ENCODE measurements at regions of chr22 and their contacts with region 1.

Region 1: DNA sequence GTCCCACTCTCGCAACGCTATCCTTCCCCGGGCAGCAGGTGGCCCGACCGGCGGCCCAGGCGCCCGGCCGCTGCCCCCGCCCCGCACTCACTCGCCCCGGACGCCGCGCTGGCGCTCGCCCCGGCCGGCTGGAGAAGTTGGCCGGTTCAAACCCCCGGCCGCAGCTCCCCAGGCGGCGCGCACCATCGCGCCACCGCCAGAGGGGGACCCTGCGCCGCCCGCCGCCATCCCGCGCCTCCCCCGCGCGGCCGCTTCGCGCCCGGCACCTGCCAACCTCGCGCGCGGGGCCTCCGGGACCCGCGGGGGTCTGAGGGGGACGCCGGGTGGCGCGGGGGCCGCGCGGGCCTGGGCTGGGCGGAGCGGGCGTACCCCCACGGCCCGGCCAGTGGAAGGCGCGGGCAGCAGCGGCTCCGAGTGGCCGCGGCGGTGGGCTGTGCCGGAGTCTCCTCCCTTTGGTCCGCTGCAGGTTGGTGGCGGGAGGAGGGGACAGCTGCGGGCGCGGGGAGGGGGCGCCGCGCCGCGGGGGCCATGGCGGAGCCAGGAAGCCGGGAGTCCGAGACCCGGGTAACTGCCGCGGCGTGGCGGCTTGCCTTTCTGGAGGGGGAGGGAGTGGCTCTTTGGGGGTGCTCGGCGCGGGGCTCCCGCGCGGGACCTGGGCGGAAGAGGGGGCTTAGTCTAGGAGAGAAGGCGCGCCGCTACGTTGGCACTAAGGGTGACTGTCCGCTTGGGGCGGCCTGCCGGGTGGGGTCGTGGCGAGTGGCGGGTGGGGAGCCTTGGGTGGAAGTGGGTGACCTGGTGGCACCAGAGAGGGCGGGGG is at the starts of genes MPST and TST:
- DNase-seq: peak; percentile 89

Region 2: DNA sequence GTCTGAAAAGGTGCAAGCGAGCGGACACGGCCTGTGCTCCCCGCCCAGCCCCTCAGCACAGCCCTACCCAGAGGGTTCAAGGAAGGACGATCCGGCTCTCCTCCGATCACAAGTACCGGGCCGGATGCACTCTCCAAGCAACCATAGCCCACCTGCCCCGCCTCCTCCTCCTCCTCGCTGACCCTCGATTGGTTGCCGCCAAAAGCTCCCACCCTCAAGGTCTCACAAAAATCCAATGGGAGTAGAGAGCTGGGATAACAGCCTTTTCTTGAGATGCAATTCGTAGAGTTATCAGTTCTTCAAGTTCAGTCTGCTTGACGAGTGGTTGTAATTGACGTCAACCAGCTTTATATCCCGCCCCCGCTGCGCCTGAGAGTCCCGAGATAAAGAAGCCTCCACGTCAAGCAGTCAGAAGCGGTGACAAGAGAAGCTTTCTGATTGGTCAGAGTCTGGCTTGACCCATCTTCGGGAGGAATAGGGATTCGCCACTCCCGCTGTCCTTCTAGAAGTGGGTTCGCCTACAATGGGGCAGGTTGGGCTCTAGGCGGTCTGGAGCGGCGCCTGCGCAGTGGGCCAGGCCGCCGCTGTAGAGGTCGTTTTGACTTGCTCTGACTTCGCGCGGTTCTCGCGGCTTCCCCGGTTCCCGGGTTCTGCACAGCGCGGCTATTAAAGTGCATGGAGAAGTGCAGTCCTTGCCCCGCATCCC is 243.4 kb before region 1 on chr22 and contains the start of gene IFT27:
- CTCF ChIA-PET with region 1: no interaction called
- POLR2A ChIA-PET with region 1: interaction called, 10 read pairs
- DNase-seq: peak; percentile 100

Region 3: DNA sequence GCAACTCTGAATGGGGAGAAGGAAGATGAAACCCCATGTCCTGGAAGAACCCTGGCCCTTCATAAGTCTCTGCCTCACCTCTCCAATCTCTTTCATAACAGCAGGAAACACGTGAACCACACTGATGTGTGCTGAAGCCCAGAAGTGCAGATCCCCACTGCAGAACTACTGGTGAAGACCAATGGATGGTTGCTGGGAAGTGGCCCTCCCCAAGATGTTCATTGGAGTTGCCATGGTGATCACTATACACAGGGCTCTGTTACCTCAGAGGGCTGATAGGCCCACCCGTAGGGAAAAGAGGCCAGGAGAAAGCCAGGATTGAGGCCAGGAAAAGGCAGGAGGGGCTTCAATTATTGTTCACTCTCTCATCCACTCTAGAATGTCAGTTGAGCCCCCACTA is 11.9 kb before region 1 on chr22:
- CTCF ChIA-PET with region 1: no interaction called
- POLR2A ChIA-PET with region 1: interaction called, 21 read pairs
- DNase-seq: no peak

Region 4: DNA sequence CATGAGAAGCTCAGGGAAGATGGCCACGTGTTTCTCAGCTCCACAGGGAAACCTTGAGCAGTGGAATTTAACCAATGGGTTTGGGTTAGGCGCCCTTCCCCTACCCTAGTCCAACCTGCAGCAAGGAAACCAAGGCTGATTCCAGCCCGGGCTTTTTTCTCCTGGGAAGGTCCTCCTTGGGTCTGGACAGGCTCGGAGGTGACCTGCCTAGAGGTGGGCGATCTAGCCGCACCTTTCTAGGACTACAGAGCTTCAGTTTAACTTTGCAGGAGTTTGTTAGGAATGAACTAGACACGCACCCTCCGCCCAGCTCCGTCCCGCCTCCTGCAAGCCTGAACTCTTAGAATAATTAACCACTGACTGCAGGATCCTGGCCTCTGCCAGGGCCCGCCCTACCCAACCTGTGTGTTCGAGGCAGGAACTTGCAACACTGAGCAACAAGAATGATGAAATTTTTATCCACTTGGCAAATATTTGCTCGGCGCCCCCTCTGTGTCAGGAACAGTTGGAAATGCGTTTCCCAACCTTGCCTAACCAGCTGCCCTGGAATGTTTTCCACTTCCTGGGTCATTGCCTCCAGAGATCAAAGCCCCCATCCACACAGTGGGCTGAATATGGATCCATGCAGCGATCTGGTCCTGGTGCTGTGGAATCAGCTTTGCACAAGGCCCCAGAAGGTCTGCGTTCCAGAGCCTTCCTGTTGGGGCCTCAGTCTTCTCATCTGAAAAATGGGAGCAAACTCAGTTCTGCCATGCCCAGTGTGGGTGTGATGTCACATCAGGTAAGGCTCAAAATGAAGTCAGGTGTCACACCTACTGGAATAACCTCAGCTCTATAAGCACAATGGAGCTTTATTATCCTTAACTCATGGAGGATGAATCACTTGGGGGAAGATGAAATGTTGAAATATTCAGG is 13.3 kb after region 1 on chr22:
- CTCF ChIA-PET with region 1: interaction called, 10 read pairs
- POLR2A ChIA-PET with region 1: interaction called, 14 read pairs
- DNase-seq: no peak

Region 5: DNA sequence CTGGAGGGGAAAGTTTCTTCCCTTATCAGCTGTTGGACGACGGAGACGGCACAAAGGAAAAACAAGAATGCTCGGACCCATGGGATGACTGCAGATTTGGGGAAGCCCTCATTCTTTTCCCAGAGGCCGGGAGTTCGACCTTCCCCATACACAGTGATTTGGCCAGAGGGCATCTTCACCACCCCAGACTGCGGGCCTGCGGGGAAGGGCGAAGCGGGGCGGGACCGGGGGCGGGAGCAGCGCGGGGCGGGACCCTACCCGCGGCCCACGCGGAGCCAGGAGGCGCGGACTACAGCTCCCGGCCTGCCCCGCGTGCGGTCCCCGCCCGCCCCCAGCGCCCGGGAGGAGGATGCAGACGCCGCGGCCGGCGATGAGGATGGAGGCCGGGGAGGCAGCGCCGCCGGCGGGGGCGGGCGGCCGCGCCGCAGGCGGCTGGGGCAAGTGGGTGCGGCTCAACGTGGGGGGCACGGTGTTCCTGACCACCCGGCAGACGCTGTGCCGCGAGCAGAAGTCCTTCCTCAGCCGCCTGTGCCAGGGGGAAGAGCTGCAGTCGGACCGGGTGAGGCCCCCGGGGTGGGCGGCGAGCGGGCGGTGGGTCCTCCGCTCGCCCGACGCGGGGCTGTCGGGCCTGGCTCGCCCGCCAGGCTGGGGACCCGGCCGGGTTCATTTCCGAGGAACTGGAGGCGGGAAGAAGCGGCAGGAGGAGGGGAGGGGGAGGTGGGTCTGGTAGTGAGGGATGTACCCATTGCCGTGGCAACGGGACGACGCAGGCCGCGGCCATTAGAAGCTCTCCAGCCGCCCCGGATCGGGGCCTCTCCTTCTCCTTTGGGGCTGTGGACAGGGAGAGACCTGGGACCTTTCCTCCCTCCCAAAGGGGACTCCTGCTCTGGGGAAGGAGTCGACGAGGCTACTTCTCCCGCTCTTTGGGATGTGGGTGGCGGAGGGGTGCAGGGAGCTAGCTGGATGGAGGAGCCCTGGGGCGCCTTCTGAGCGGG is 32.2 kb after region 1 on chr22 and contains the start of gene KCTD17:
- CTCF ChIA-PET with region 1: no interaction called
- POLR2A ChIA-PET with region 1: interaction called, 12 read pairs
- DNase-seq: peak; percentile 95